MCF 10A (cell line): ENCODE measurements at regions of chr14 and their contacts with region 1.

Region 1: DNA sequence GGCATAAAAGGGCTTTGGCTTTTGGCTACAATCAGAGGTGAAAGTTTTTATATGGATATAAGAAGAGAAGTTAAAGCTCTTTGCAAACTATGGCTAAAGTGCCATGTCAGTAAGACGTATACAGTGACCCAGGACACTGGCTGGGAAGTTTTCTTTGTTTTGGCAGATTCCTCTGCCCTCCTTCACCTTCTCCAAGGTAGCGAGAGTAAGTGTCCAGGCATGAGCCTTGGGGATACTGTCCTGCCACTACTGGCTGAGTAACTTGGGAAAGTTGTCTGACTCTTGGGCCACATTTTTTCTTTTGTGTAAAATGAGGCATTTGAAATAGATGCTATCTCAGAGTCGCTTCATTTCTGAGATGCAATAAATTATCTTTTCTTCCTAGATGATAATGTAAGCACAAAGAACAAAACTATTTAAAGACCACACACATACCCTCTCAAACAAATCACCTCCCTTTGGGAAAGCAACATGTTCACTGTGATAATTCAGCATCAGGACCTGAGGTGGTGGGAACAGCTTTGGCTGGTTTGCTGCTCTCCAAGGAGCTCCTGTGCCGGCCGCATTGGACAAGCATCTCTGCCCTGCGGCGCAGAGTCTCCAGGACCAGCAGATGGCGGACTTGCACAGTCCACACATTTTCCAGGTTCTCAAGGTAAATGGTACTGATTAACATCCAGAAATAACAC is 106.3 kb downstream of the PTCSC3 start:
- DNase-seq: peak; percentile 79
- H3K4me3 Mint-ChIP-seq: peak overlapping the region; percentile 37
- H3K27ac Mint-ChIP-seq: peak overlapping the region; percentile 92
- H3K4me1 Mint-ChIP-seq: peaks cover 10% of the 10 kb centered on the region
- H3K27me3 Mint-ChIP-seq: no peaks in the 10 kb centered on the region
- CTCF ChIP-seq: peak; percentile 82

Region 2: GRCh38 chr14:35826218-35826951 is 243.8 kb before region 1 on chr14 and contains the start of gene BRMS1L:
- CTCF ChIA-PET with region 1: no interaction called
- POLR2A ChIA-PET with region 1: no interaction called
- intact Hi-C with region 1: no loop called
- DNase-seq: peak; percentile 98
- H3K4me3 Mint-ChIP-seq: peak within 1 kb of the TSS; percentile 85
- H3K27ac Mint-ChIP-seq: peak within 1 kb of the TSS; percentile 66
- H3K4me1 Mint-ChIP-seq: peaks cover 29% of the 10 kb centered on the region
- H3K27me3 Mint-ChIP-seq: no peaks in the 10 kb centered on the region
- CTCF ChIP-seq: no peak
- total RNA-seq, gene BRMS1L: 7.8 and 10.8 TPM in 2 replicates

Region 3: DNA sequence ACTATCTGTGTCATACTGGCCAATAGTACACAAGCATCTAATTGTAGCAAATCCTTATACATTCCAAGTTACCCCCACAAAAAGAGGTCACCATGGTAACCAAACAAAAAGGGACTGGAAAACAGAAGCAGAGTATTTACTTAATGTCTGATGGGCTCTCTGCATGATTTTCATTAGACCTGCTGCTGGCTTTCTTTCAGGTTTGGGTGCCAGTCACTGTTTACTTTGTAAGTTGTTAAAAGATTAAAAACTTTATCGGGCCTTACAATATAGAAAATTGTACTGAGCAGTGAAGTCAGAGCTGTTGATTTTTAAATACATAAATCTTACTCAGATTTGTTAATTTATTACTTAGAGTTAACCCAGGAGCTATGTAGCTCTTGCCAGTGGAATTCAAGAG is 120.2 kb before region 1 on chr14:
- CTCF ChIA-PET with region 1: no interaction called
- POLR2A ChIA-PET with region 1: no interaction called
- intact Hi-C with region 1: loop called (anchors 2 kb)
- DNase-seq: no peak
- H3K4me3 Mint-ChIP-seq: no peak overlapping the region
- H3K27ac Mint-ChIP-seq: no peak overlapping the region
- H3K4me1 Mint-ChIP-seq: no peaks in the 10 kb centered on the region
- H3K27me3 Mint-ChIP-seq: no peaks in the 10 kb centered on the region
- CTCF ChIP-seq: no peak

Region 4: GRCh38 chr14:36052681-36053080 is 17.5 kb before region 1 on chr14:
- CTCF ChIA-PET with region 1: interaction called, 18 read pairs
- POLR2A ChIA-PET with region 1: interaction called, 6 read pairs
- intact Hi-C with region 1: no loop called
- DNase-seq: no peak
- H3K4me3 Mint-ChIP-seq: no peak overlapping the region
- H3K27ac Mint-ChIP-seq: no peak overlapping the region
- H3K4me1 Mint-ChIP-seq: peaks cover 17% of the 10 kb centered on the region
- H3K27me3 Mint-ChIP-seq: no peaks in the 10 kb centered on the region
- CTCF ChIP-seq: no peak

Region 5: DNA sequence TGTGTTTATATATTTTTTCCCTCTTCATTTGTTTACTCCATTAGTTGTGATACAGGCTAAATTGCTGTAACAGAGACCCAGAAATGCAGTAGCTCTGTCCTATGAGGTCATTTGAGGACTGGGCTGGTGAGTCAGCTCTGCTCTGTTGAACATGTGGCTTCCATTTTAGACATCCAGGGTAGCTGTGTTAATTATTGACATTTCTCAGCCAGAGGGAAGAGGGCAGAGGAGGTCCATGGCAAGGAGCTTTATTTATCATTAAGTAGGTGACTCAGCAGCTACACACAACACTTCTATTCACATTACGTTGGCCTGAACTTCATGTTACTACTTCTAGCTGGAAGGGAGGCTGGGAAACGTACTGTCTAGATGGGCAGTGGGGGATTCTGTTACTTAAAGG is 20.9 kb after region 1 on chr14:
- CTCF ChIA-PET with region 1: interaction called, 23 read pairs
- POLR2A ChIA-PET with region 1: no interaction called
- intact Hi-C with region 1: no loop called
- DNase-seq: peak; percentile 68
- H3K4me3 Mint-ChIP-seq: no peak overlapping the region
- H3K27ac Mint-ChIP-seq: no peak overlapping the region
- H3K4me1 Mint-ChIP-seq: peaks cover 12% of the 10 kb centered on the region
- H3K27me3 Mint-ChIP-seq: no peaks in the 10 kb centered on the region
- CTCF ChIP-seq: no peak

Region 6: DNA sequence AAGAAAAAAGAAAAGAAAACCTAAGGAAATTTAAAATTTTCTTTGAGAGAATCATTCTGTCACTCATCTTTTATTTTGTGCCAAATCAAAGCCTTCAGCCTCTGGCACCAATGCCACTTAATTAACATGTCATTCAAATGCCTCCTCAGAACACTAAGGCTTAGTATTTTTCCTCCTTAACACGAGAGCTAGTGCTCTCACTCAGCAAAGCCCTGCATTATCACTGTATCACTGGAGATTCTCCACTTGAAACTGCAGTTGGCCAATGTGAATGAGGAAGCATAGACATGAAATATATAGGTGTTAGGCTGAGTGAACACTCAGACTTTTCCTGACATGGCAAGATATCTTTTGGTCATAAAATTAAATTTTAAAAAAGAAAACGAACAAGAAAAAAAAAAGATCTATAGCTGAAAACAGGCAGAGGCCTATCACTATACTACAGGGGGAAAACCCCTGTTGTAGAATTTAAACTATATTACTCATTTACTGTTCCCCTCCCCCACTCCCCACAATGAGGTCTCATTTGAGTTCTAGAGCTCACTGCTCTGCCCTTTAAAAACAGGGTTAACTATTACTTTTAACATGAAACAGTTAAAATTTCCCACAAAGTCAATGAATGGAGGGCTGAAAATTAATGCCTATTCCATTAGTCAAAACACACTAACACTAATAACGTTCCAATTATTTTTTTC is 245.1 kb after region 1 on chr14:
- CTCF ChIA-PET with region 1: interaction called, 9 read pairs
- POLR2A ChIA-PET with region 1: interaction called, 4 read pairs
- intact Hi-C with region 1: loop called (anchors 2 kb)
- DNase-seq: no peak
- H3K4me3 Mint-ChIP-seq: no peak overlapping the region
- H3K27ac Mint-ChIP-seq: no peak overlapping the region
- H3K4me1 Mint-ChIP-seq: peaks cover 10% of the 10 kb centered on the region
- H3K27me3 Mint-ChIP-seq: no peaks in the 10 kb centered on the region
- CTCF ChIP-seq: no peak

Region 7: DNA sequence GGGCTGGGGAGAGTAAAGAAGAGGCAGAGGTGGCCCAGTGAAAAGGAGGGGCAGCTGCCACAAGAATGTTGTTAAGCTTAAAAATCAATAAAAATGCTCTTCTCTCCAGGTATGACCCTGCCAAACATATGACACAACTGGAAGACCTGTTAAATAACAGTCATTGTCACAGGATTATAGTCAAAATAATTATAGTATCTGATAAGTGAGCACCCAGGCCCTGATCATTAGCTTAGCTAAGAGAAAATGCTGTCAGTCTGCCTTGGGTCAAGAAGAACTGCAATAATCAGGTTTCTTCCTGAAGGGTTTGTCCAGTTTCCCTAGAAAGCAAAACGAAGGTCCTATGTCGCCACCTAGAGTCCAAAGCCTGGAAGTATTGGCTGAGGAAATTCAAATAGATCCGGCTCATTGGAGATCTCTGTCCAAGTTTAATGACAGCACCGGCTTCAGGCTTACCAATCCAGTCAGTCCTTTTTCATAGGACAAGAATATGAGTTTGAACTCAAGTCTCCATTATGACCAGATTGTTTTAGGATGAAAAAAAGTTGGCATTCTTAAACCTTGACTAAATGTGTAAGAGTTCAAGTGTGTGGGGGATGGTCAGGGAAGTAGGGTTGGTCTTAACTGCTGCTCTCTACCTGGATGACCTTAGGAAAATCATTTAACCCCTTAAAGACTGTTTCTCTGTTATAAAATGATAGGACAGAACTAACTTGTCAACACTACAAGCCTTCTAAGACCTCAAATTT is 534.8 kb after region 1 on chr14:
- CTCF ChIA-PET with region 1: interaction called, 35 read pairs
- POLR2A ChIA-PET with region 1: no interaction called
- intact Hi-C with region 1: loop called (anchors 1 kb)
- DNase-seq: peak; percentile 90
- H3K4me3 Mint-ChIP-seq: no peak overlapping the region
- H3K27ac Mint-ChIP-seq: no peak overlapping the region
- H3K4me1 Mint-ChIP-seq: peaks cover 12% of the 10 kb centered on the region
- H3K27me3 Mint-ChIP-seq: no peaks in the 10 kb centered on the region
- CTCF ChIP-seq: peak; percentile 63